ENCODE measurements at regions of chr11 and their contacts with region 1.

Region 1: GRCh38 chr11:115699733-115700132 is 195.5 kb upstream of the CADM1 start:
- DNase-seq: no peak
- ATAC-seq: peak; percentile 65 to 83 (median 69)
- H3K4me3 ChIP-seq: no peak overlapping the region
- H3K27ac ChIP-seq: no peak overlapping the region
- H3K4me1 ChIP-seq: peaks cover 4% of the 10 kb centered on the region
- H3K27me3 ChIP-seq: no peaks in the 10 kb centered on the region
- CTCF ChIP-seq: no peak

Region 2: DNA sequence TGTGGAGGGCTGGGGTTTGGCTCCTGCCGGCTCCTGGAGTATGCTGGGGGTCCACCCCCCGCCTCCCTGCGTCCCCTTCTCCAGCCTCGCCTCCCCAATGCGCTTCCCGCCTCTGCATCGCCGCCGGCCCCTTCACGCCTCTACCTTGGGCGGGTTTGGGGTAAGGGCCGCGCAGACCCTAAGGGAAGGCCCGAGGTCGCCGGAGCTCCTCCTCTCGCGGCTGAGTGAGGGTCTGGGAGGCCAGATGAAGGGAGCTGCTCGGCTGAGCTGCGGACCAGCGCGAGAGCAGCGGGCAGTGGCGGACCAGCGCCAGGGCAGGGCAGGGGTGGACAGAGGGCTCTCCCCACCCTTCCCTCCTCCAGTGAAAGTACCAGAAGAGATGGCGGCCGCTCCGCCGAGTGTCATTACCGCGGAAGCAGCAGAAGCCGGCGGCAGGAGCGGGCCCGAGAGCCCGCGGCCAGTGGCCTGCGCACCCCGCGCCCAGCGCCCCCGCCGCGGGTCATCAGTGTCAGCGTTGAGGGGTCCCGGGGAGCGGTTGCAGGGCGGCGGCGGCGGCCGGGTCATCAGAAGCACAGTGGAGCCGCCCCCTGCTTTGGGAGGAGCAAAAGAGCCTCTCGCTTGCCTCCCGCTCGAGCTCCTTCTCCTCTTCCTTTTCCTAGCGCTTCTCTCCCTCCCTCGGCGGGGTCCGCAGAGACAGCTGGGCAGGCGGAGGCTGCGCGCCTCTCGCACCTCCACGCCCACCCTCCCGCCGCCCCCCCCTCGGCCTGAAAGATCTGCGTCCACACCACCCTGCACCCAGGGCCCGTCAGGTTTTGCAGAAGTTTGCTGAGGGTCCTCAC is 60.1 kb after region 1 on chr11:
- intact Hi-C with region 1: loop called in 1 of 2 experiments (anchors 10 kb)
- DNase-seq: peak; percentile 27 to 63
- ATAC-seq: peak in 3 of 4 donors; percentile 30 to 57 (median 44)
- H3K4me3 ChIP-seq: peak overlapping the region; percentile 72
- H3K27ac ChIP-seq: no peak overlapping the region
- H3K4me1 ChIP-seq: peaks cover 3% of the 10 kb centered on the region
- H3K27me3 ChIP-seq: peaks cover 0 to 14% (median 4%) of the 10 kb centered on the region in 3 donors
- CTCF ChIP-seq: no peak